ENCODE measurements at regions of chr1 and their contacts with region 1.

Region 1: GRCh38 chr1:151006327-151007052 is at the start of gene MINDY1:
- DNase-seq: peak; percentile 63
- H3K4me3 ChIP-seq: peak within 1 kb of the TSS; percentile 70
- H3K27ac ChIP-seq: peak within 1 kb of the TSS; percentile 66
- H3K27me3 ChIP-seq: no peaks in the 10 kb centered on the region
- CTCF ChIP-seq: peak; percentile 72
- polyA plus RNA-seq, gene MINDY1: 12.8 and 18.0 TPM in 2 replicates

Region 2: GRCh38 chr1:150979092-150980056 is 27.1 kb before region 1 on chr1:
- CTCF ChIA-PET with region 1: interaction called, 38 read pairs
- POLR2A ChIA-PET with region 1: no interaction called
- DNase-seq: peak; percentile 75
- H3K4me3 ChIP-seq: no peak overlapping the region
- H3K27ac ChIP-seq: no peak overlapping the region
- H3K27me3 ChIP-seq: no peaks in the 10 kb centered on the region
- CTCF ChIP-seq: peak; percentile 100

Region 3: GRCh38 chr1:151281969-151282882 is 275.7 kb after region 1 on chr1 and contains the start of gene ZNF687:
- CTCF ChIA-PET with region 1: no interaction called
- POLR2A ChIA-PET with region 1: no interaction called
- DNase-seq: peak; percentile 100
- H3K4me3 ChIP-seq: peak within 1 kb of the TSS; percentile 98
- H3K27ac ChIP-seq: peak within 1 kb of the TSS; percentile 100
- H3K27me3 ChIP-seq: peaks cover 3% of the 10 kb centered on the region
- CTCF ChIP-seq: no peak
- polyA plus RNA-seq, gene ZNF687: 10.5 and 12.0 TPM in 2 replicates